T-cell (primary cell): ENCODE measurements at regions of chr3 and their contacts with region 1.

Region 1: GRCh38 chr3:13391308-13391707 is 28.8 kb downstream of the NUP210 start:
- DNase-seq: peak in 21 of 35 experiments; percentile 7 to 59 (median 24)
- ATAC-seq: peak in 2 of 4 experiments; percentile 34 to 48
- H3K4me3 ChIP-seq: no peak overlapping the region
- H3K4me3 Mint-ChIP-seq: no peak overlapping the region
- H3K27ac ChIP-seq: no peak overlapping the region
- H3K27ac Mint-ChIP-seq: peak overlapping the region in 1 of 2 donors; percentile 69
- H3K4me1 ChIP-seq: peaks cover 0 to 26% of the 10 kb centered on the region in 2 experiments
- H3K4me1 Mint-ChIP-seq: peaks cover 27 to 38% (median 30%) of the 10 kb centered on the region in 3 donors
- H3K27me3 ChIP-seq: no peaks in the 10 kb centered on the region
- H3K27me3 Mint-ChIP-seq: no peaks in the 10 kb centered on the region

Region 2: DNA sequence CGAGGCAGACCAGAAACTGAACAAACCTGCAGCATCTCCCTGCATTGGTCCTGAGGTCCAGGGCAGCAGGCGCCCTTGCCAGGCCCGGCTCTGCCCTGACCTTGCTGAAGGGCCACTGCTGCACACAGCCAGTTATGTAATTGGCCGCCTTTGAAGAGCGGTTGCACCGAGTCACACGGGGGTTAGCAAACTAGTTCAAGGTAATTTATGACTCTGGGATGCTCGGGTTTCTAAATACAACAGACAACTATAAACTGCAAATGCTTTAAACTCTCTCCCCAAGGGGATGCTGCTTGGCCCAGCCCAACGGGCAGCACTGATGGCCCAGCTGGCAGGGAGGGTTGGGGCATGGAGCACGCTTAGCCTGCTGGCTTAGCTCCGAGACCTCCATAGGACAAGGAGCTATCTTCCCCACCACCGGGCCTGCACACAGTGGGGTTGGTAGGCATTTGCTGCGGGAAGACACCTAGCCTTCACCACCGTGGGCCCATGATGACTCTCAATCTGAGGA is 257.8 kb before region 1 on chr3:
- CTCF ChIA-PET with region 1: no interaction called
- POLR2A ChIA-PET with region 1: interaction called in 1 of 2 experiments, 14 read pairs
- DNase-seq: peak in 1 of 35 experiments; percentile 8
- ATAC-seq: no peak
- H3K4me3 ChIP-seq: no peak overlapping the region
- H3K4me3 Mint-ChIP-seq: no peak overlapping the region
- H3K27ac ChIP-seq: no peak overlapping the region
- H3K27ac Mint-ChIP-seq: no peak overlapping the region
- H3K4me1 ChIP-seq: no peaks in the 10 kb centered on the region
- H3K4me1 Mint-ChIP-seq: peaks cover 4 to 12% (median 6%) of the 10 kb centered on the region in 3 donors
- H3K27me3 ChIP-seq: peaks cover 0 to 35% of the 10 kb centered on the region in 2 experiments
- H3K27me3 Mint-ChIP-seq: peaks cover 0 to 12% of the 10 kb centered on the region in 2 donors